ENCODE measurements at regions of chr4 and their contacts with region 1.

Region 1: GRCh38 chr4:149031399-149031798 is 589.2 kb upstream of the NR3C2 start:
- DNase-seq: no peak
- H3K4me3 ChIP-seq: no peak overlapping the region
- H3K27ac ChIP-seq: no peak overlapping the region
- H3K4me1 ChIP-seq: no peaks in the 10 kb centered on the region
- H3K27me3 ChIP-seq: no peaks in the 10 kb centered on the region
- CTCF ChIP-seq: peak in 2 of 3 experiments; percentile 46 to 61; a peak in 2 of 4 replicates
- EP300 ChIP-seq: no peak
- POLR2A ChIP-seq: no peak
- RAD21 ChIP-seq: peak; percentile 66 to 71

Region 2: GRCh38 chr4:148692242-148692641 is 339.2 kb before region 1 on chr4:
- CTCF ChIA-PET with region 1: no interaction called
- POLR2A ChIA-PET with region 1: no interaction called
- DNase-seq: no peak
- H3K4me3 ChIP-seq: no peak overlapping the region
- H3K27ac ChIP-seq: no peak overlapping the region
- H3K4me1 ChIP-seq: no peaks in the 10 kb centered on the region
- H3K27me3 ChIP-seq: no peaks in the 10 kb centered on the region
- CTCF ChIP-seq: no peak
- EP300 ChIP-seq: no peak
- POLR2A ChIP-seq: no peak
- RAD21 ChIP-seq: no peak

Region 3: DNA sequence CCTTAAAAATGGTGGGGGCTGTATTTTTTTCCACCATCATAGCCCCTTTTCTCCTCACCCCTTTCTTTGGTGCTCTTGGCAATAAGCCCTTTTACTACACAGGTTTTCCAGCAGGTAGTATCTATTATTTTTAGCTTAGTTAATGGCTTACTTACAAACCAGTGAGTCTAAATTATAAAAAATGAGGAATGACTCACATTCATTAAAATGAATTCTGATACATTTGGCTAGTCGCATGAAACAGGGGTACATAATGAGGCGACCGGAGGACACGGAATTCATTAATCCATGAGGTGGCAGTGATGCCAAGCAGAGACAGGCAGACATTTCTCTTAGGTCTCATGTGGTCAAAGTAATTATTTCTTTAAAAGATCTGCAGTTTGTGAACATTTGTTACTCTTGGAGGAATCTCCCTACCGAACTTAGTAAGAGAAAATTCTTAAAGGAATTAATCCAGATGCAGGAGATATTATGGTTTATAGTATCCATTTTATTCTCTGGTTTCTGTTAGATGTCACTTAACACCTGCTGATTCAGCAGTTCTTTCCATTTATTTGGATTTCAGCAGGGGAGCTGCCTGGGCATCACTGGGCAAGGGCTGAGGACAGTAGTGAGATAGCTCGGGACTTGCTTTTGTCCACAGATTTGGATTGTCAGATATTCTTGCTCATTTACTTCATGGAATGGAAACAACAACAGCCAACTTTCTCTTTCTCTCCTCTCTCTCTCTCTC is 14.2 kb before region 1 on chr4:
- CTCF ChIA-PET with region 1: interaction called, 30 read pairs
- POLR2A ChIA-PET with region 1: no interaction called
- DNase-seq: no peak
- H3K4me3 ChIP-seq: no peak overlapping the region
- H3K27ac ChIP-seq: no peak overlapping the region
- H3K4me1 ChIP-seq: no peaks in the 10 kb centered on the region
- H3K27me3 ChIP-seq: no peaks in the 10 kb centered on the region
- CTCF ChIP-seq: no peak
- EP300 ChIP-seq: no peak
- POLR2A ChIP-seq: no peak
- RAD21 ChIP-seq: no peak

Region 4: DNA sequence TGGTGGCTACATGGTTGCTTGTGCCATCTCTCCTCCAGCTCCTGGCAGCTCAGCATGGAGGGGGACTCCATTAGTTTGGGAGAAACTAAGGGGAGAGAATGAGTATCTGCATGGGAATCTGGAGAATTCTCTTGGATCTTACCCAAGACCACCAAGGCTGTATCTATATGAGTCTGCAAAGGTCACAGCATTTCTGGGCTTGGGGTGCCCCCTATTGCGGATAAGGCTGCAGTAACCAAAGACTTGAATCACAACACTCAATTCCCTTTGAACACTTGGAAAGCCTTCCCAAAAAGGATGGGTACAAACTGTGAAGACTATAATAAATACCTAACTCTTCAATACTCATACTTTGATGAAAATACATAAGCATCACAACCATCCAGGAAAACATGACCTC is 34.4 kb after region 1 on chr4:
- CTCF ChIA-PET with region 1: no interaction called
- POLR2A ChIA-PET with region 1: no interaction called
- DNase-seq: no peak
- H3K4me3 ChIP-seq: no peak overlapping the region
- H3K27ac ChIP-seq: no peak overlapping the region
- H3K4me1 ChIP-seq: no peaks in the 10 kb centered on the region
- H3K27me3 ChIP-seq: no peaks in the 10 kb centered on the region
- CTCF ChIP-seq: peak in 1 of 3 experiments; percentile 30; a peak in 1 of 4 replicates
- EP300 ChIP-seq: no peak
- POLR2A ChIP-seq: no peak
- RAD21 ChIP-seq: peak; percentile 67 to 72

Region 5: DNA sequence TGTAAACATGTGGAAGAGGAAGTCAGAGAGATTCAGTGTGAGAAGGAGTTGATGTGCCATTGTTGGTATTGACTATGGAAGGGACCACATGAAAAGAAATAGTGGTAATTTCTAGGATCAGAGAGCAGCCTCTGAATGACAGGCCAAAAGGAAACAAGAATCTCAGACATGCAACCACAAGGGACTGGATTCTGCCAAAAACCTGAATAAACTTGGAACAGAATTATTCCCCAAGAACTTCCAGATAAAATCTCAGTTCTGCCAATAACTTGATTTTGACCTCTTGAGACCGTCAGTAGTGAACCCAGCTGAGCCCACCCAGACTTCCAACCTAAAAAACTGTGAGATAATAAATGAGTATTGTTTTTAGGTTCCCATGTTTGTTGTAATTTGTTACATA is 64.4 kb after region 1 on chr4:
- CTCF ChIA-PET with region 1: no interaction called
- POLR2A ChIA-PET with region 1: no interaction called
- DNase-seq: no peak
- H3K4me3 ChIP-seq: no peak overlapping the region
- H3K27ac ChIP-seq: no peak overlapping the region
- H3K4me1 ChIP-seq: no peaks in the 10 kb centered on the region
- H3K27me3 ChIP-seq: no peaks in the 10 kb centered on the region
- CTCF ChIP-seq: no peak
- EP300 ChIP-seq: no peak
- POLR2A ChIP-seq: no peak
- RAD21 ChIP-seq: no peak

Region 6: DNA sequence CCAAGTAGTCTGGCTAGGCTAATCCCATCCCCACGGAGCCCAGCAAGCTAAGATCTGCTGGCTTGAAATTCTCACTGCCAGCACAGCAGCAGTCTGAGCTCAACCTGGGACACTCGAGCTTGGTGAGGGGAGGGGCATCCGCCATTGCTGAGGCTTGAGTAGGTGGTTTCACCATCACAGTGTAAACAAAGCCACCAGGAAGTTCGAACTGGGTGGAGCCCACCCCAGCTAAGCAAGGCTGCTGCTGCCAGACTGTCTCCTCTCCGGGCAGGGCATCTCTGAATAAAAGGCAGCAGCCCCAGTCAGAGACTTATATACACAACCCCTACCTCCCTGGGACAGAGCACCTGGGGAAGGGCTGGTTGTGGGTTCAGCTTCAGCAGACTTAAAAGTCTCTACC is 144.6 kb after region 1 on chr4:
- CTCF ChIA-PET with region 1: no interaction called
- POLR2A ChIA-PET with region 1: no interaction called
- DNase-seq: no peak
- H3K4me3 ChIP-seq: no peak overlapping the region
- H3K27ac ChIP-seq: no peak overlapping the region
- H3K4me1 ChIP-seq: 0 out of 7 replicates have a peak, but pooled peaks cover 0 to 3% (median 0%) of the 10 kb centered on the region in 4 experiments
- H3K27me3 ChIP-seq: no peaks in the 10 kb centered on the region
- CTCF ChIP-seq: no peak
- EP300 ChIP-seq: no peak
- POLR2A ChIP-seq: no peak
- RAD21 ChIP-seq: no peak

Region 7: GRCh38 chr4:149264093-149264733 is 232.8 kb after region 1 on chr4:
- CTCF ChIA-PET with region 1: interaction called, 13 read pairs
- POLR2A ChIA-PET with region 1: no interaction called
- DNase-seq: peak in 1 of 2 experiments; percentile 48
- H3K4me3 ChIP-seq: no peak overlapping the region
- H3K27ac ChIP-seq: no peak overlapping the region
- H3K4me1 ChIP-seq: no peaks in the 10 kb centered on the region
- H3K27me3 ChIP-seq: no peaks in the 10 kb centered on the region
- CTCF ChIP-seq: peak; percentile 34 to 72 (median 67)
- EP300 ChIP-seq: no peak
- POLR2A ChIP-seq: no peak
- RAD21 ChIP-seq: peak; percentile 85 to 91

Measured in H1 (cell line).